GM10248 (cell line): ENCODE measurements at regions of chr4 and their contacts with region 1.

Region 1: DNA sequence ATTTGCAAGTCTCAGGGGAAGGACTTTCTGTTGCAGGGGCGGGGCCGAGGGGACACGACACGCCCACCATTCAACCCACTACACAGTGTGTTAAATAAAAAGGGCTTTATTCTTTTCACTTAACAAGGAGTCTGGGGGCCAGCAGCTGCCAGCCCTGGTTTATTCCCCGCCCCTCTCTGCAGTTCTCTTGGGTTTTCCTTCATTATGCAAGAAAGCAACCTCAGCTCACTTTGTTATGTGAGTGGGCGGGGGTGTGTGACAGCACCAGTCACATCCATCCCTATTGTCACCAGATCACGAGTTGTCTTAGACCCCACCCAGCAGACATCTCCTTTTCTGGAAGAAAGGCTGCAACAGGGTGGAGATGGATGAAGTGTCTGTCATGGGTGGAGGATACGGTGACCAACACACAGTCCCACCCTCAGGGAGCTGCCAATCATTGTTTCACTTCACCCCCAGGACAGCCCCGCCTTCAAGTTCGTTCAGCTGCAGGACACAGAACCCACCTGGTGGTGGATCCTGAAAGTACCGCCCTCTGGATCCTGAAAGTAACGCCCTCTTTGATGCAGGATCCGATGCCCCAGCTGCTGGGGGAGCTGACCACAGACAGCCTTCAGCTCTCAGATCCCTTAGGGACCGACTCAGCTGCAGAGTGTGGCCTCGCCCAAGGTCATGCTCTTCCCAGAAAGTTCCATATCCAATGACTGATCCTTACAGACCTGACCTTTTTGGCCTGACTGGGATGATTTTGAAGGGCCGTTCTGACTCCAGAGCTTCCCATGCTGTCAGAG is 79.6 kb downstream of the SMIM20 start:
- DNase-seq: peak; percentile 42
- CTCF ChIP-seq: no peak

Region 2: GRCh38 chr4:25925486-25926201 is 67.9 kb before region 1 on chr4:
- CTCF ChIA-PET with region 1: interaction called, 15 read pairs
- POLR2A ChIA-PET with region 1: no interaction called
- DNase-seq: peak; percentile 58
- CTCF ChIP-seq: peak; percentile 51

Region 3: DNA sequence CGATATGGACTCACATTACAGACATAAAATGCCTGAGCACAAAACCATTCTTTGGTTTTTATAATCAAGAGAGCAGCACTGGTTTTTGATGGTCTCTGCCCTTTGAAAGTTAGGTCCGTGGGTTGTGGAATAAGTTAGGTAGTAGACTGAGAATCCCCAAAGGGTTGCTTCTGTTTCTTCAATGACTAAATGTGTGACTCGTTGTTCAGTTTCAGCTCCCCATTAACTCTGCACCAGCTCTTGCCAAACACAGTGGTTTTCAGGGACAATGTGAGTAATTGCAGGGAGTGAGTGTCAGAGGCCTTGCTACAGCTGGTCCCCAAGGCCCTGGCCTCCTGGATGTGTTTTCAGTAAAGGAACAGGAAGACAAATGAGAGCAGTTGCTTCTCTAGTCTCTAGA is 54.8 kb before region 1 on chr4:
- CTCF ChIA-PET with region 1: interaction called, 12 read pairs
- POLR2A ChIA-PET with region 1: no interaction called
- DNase-seq: peak; percentile 65
- CTCF ChIP-seq: no peak

Region 4: GRCh38 chr4:25956260-25956659 is 37.3 kb before region 1 on chr4:
- CTCF ChIA-PET with region 1: interaction called, 15 read pairs
- POLR2A ChIA-PET with region 1: no interaction called
- DNase-seq: no peak
- CTCF ChIP-seq: no peak

Region 5: GRCh38 chr4:25970226-25970675 is 23.3 kb before region 1 on chr4:
- CTCF ChIA-PET with region 1: interaction called, 52 read pairs
- POLR2A ChIA-PET with region 1: no interaction called
- DNase-seq: peak; percentile 55
- CTCF ChIP-seq: no peak

Region 6: GRCh38 chr4:25981749-25982148 is 11.8 kb before region 1 on chr4:
- CTCF ChIA-PET with region 1: interaction called, 45 read pairs
- POLR2A ChIA-PET with region 1: no interaction called
- DNase-seq: no peak
- CTCF ChIP-seq: no peak

Region 7: DNA sequence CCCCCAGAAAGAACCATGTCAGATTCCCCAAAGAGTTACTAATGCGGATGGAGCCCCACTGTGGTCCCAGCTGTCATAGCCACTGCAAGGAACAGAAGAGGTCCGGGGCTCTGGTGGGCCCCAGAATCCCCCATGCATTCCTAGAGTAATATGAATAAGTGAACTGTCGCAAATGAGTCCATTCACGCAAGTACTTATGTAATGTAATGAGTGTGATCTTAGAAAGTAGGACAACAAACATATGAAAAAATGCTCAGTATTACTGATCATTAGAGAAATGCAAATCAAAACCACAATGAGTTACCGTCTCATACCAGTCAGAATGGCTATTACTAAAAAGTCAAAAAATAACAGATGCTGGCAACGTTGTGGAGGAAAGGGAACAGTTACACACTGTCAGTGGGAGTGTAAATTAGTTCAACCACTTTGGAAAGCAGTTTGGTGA is 185.7 kb after region 1 on chr4:
- CTCF ChIA-PET with region 1: no interaction called
- POLR2A ChIA-PET with region 1: no interaction called
- DNase-seq: peak; percentile 37
- CTCF ChIP-seq: peak; percentile 24